ENCODE measurements at regions of chr19 and their contacts with region 1.

Region 1: DNA sequence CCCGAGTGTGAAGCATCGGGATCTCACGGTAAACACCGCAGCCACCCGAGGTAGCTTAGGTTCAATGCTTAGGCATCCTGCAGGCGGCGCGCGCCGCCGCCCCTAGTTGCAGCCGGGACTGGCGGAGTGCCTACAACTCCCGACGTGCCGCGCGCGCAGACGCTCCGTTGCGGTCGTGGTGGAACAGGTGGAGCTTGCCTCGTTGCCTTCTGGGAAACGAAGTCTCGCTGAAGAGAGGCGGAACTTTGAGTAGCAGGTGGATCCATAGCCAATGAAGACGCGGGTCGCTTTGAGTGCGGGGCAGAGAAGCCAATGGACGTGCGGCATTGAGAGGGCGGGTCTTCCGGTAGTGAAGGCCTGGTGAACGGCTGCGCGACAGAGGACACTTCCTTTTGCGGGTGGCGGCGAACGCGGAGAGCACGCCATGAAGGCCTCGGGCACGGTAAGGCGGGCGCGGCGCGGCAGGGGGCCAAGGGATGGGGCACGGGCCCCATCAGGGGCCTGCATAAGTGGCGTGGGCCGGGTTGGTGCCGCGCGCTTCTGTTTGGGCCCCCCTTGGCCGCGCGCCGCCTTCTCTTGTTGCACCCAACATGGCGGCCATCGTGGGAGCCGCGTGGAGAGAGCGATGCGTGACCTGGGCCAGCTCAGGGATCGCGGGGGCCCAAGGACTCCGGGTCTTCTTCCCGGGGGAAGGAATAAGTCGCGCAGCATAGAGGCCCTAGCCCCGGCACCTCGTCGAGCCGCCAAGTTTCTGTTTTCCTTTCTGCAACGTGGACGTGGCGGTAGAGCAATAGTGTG is at the start of gene RPL18A:
- H3K4me3 ChIP-seq: peak within 1 kb of the TSS; percentile 100
- H3K27ac ChIP-seq: peak within 1 kb of the TSS; percentile 76
- H3K4me1 ChIP-seq: 0 out of 2 replicates have a peak, but pooled peaks cover 3% of the 10 kb centered on the region
- CTCF ChIP-seq: peak; percentile 97

Region 2: GRCh38 chr19:17419621-17420466 is 439.9 kb before region 1 on chr19 and contains the start of gene MVB12A:
- CTCF ChIA-PET with region 1: no interaction called
- POLR2A ChIA-PET with region 1: interaction called, 12 read pairs
- H3K4me3 ChIP-seq: peak within 1 kb of the TSS; percentile 69
- H3K27ac ChIP-seq: peak within 1 kb of the TSS; percentile 37
- H3K4me1 ChIP-seq: no peaks in the 10 kb centered on the region; the same call in 1 of the 2 replicates
- CTCF ChIP-seq: no peak

Region 3: GRCh38 chr19:17766543-17767131 is 93.1 kb before region 1 on chr19:
- CTCF ChIA-PET with region 1: interaction called, 11 read pairs
- POLR2A ChIA-PET with region 1: no interaction called
- H3K4me3 ChIP-seq: peak overlapping the region; percentile 37
- H3K27ac ChIP-seq: no peak overlapping the region; the same call in 1 of the 2 replicates
- H3K4me1 ChIP-seq: no peaks in the 10 kb centered on the region
- CTCF ChIP-seq: peak; percentile 87

Region 4: DNA sequence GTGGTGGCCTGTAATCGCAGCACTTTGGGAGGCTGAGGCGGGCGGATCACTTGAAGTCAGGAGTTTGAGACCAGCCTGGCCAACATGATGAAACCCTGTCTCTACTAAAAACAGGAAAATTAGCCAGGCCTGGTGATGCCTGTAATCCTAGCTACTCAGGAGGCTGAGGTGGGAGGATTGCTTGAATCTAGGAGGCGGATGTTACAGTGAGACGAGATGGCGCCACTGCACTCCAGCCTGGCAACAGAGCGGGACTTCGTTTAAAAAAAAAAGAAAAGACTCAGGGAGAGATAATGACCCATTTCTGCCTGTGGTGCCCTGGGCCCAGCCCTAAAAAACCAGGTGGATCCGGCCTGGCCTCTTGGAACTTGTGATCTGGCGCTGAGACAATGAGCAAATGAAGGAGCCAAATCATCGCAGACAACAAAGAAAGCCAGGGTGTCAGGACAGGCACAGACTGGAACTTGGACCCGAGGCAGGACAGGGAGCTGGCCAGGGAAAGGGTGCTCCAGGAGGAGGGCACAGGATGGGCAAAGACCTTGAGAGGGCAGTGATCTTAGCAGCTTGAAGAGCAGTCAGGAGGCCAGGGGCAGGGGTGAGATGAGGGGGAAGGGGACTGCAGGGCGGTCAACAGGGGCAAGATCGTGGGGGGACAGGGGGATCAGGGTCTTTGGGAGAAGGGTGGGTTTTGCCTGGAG is 11.0 kb before region 1 on chr19:
- CTCF ChIA-PET with region 1: interaction called, 14 read pairs
- POLR2A ChIA-PET with region 1: interaction called, 14 read pairs
- H3K4me3 ChIP-seq: no peak overlapping the region
- H3K27ac ChIP-seq: no peak overlapping the region
- H3K4me1 ChIP-seq: no peaks in the 10 kb centered on the region
- CTCF ChIP-seq: no peak

Region 5: GRCh38 chr19:17893766-17894165 is 34.0 kb after region 1 on chr19:
- CTCF ChIA-PET with region 1: no interaction called
- POLR2A ChIA-PET with region 1: no interaction called
- H3K4me3 ChIP-seq: no peak overlapping the region
- H3K27ac ChIP-seq: no peak overlapping the region
- H3K4me1 ChIP-seq: no peaks in the 10 kb centered on the region
- CTCF ChIP-seq: no peak

Region 6: GRCh38 chr19:17932485-17933338 is 73.0 kb after region 1 on chr19 and contains the start of gene CCDC124:
- CTCF ChIA-PET with region 1: interaction called, 25 read pairs
- POLR2A ChIA-PET with region 1: interaction called, 86 read pairs
- H3K4me3 ChIP-seq: peak within 1 kb of the TSS; percentile 92
- H3K27ac ChIP-seq: peak within 1 kb of the TSS; percentile 75
- H3K4me1 ChIP-seq: no peaks in the 10 kb centered on the region
- CTCF ChIP-seq: peak; percentile 99

Region 7: DNA sequence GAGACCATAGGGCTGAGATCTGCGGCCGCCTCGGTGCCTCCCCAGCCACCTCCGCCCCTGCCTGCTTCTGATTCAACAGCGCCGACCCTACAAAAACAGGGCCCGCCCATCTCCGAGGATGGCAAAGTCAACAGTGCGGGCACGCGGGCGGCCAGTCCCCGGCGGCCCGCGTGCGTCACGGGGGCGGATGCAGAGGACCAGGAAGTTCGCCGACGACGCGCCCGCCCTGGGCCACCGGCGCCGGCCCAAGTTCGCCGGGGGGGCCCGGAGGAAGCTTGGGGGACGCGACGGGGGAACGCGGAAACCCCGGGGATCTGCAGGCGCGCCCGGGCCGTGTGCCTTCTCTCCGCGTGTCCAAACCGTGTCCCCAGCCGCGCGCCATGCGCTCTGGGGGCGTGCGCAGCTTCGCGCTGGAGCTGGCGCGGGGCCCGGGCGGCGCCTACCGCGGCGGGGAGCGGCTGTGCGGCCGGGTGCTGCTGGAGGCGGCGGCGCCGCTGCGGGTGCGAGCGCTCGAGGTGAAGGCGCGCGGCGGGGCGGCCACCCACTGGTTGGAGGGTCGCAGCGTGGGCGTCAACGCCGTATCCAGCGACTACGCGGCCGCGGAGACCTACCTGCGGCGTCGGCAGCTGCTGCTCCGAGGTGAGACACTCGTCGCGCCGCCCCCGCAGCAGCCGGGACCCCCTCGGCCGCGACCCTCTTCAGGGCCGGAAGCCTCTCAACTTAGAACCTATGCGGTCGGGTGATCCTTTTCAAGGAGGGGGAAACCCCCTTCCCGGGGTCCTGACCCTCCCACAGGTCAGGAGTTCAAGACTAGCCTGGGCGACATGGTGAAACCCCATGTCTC is 141.4 kb after region 1 on chr19:
- CTCF ChIA-PET with region 1: interaction called, 15 read pairs
- POLR2A ChIA-PET with region 1: interaction called, 4 read pairs
- H3K4me3 ChIP-seq: peak overlapping the region; percentile 47
- H3K27ac ChIP-seq: no peak overlapping the region; the same call in 1 of the 2 replicates
- H3K4me1 ChIP-seq: no peaks in the 10 kb centered on the region
- CTCF ChIP-seq: no peak

Region 8: DNA sequence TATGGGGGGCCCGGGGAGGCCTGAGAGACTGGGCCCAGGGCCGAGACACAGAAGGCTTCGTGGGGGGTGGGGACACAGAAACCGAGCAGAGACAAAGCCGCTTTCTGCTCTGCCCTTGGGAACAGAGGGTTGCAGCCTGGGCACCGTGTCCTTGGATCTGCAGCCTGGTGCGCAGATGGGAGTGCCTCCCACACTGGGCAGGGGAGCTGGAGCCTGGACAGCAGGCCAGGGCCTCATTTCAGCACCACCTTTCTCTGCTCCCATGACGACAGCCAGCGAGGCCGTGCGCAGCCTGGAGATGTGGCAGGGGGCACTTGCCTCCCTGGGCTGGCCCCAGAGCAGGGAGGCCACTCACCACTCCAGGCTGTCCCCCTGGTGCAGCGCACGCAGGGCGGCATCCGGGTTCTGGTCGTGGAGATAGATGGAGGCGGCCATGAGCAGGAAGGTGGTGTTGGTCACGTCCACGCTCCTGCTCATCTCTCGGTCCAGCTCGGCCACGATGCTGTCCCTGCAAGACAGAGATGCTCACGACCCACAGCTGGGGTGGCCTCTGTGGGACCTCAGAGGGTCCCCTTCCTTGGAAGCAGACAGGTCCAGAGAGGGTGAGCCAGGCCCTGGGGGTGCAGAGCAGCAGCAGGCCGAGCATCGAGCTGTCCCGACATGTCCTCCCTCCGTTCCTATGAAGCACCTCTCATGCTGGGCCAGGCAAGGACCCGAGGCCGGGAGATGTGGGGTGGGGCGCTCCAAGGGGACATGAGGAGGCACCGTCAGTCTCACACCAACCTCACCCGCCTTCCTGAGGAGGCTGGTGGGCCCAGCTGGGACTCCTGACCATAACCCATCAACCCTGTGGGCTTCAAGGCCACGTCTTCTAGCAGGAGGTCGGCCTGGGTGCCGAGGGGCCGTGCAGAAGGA is 1047.1 kb after region 1 on chr19:
- CTCF ChIA-PET with region 1: no interaction called
- POLR2A ChIA-PET with region 1: no interaction called
- H3K4me3 ChIP-seq: no peak overlapping the region
- H3K27ac ChIP-seq: no peak overlapping the region
- H3K4me1 ChIP-seq: no peaks in the 10 kb centered on the region
- CTCF ChIP-seq: no peak